Left lung (tissue), 14 donors: ENCODE measurements at regions of chr1 and their contacts with region 1.

Region 1: DNA sequence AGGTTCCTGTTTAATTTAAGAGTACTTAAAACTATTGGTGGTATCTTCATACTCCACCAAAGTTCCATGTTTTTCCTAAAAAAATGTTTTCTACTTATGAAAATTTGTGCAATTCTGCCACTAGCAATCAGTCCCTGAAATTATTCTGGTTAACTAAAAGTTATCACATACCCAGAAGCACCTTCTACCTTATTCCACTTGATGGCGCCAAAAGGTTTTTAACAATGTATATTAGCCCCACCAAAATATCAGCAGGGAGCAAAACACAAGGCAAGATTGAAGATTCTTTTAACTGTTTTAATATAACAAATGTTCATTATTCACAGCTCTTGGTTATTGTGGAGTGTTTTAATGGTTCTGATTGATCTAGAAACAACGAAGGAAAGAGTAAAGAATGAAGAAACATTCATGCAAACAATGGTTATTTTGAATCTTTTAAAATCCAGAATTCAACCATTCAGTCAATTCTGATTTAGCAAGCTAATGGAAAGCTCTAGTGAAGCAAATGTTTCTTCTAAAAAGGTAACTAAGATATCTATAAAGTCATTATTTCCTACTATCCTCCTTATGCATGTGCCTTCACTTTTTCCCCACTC is 67.2 kb downstream of the TTLL7 start:
- DNase-seq: peak in 2 of 4 donors; percentile 33 to 59
- ATAC-seq: peak; percentile 77
- H3K4me3 ChIP-seq: no peak overlapping the region
- H3K27ac ChIP-seq: no peak overlapping the region
- H3K4me1 ChIP-seq: no peaks in the 10 kb centered on the region
- H3K27me3 ChIP-seq: no peaks in the 10 kb centered on the region
- CTCF ChIP-seq: peak; percentile 51 to 57

Region 2: GRCh38 chr1:83791821-83792437 is 139.8 kb before region 1 on chr1:
- intact Hi-C with region 1: no loop called
- DNase-seq: no peak
- ATAC-seq: peak; percentile 33
- H3K4me3 ChIP-seq: no peak overlapping the region
- H3K27ac ChIP-seq: no peak overlapping the region
- H3K4me1 ChIP-seq: no peaks in the 10 kb centered on the region
- H3K27me3 ChIP-seq: no peaks in the 10 kb centered on the region
- CTCF ChIP-seq: no peak

Region 3: DNA sequence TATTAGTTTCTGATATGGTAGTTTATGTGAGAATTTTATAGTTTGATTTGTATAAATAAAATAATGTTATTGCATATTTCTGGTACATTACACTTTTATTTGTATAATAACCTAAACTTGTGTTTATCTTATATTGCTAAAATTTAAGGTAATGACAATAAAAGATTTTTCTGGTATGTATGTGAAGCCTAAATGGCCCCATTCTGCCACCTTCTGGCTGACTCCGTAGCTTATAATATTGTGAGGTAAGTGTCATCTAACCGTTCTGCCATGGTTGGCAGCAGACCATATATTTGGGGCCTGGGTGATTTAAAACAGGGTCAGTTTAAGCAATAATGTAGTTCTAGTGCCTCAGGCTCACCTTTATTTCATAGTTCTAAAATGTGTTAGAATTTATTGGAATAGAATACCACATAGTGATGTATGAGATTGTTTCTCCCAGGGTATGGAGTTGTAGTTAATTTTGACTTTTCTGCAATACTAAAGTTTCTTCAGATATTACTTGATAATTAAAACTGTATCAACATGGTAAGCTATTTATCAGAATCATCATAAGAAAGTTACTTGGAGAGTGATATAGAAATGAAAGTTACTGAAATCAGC is 191.1 kb after region 1 on chr1:
- intact Hi-C with region 1: loop called in 1 of 2 experiments (anchors 10 kb)
- DNase-seq: peak in 1 of 4 donors; percentile 40
- ATAC-seq: peak; percentile 77
- H3K4me3 ChIP-seq: no peak overlapping the region
- H3K27ac ChIP-seq: no peak overlapping the region
- H3K4me1 ChIP-seq: no peaks in the 10 kb centered on the region
- H3K27me3 ChIP-seq: no peaks in the 10 kb centered on the region
- CTCF ChIP-seq: peak; percentile 26 to 65

Region 4: DNA sequence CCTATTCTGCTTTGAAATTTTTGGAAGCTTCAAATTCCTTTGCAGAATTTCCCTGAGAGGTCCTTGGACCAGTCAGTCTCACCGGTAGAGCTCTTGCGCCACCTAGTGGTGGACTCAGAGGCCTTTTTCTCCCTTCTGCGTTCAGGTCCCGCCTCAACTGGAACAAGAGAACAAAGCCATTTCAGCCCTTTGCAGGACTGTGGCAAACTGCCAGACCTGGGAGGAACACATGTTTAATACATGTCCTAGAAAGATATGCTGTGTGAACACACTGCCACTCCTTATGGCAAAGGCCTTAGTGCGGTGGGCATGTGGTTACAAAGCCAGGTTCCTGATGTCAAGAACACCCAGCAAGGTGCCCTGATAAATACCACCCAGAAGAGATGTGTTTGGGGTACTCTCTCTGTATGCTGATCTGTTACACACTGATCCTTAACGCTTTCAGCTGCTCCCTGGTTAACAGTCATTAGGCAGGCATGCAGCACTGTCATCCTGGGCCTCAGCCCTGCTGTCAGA is 840.7 kb after region 1 on chr1:
- intact Hi-C with region 1: loop called in 1 of 2 experiments (anchors 10 kb)
- DNase-seq: peak in 3 of 4 donors; percentile 71 to 89 (median 75)
- ATAC-seq: peak; percentile 97
- H3K4me3 ChIP-seq: no peak overlapping the region
- H3K27ac ChIP-seq: no peak overlapping the region
- H3K4me1 ChIP-seq: no peaks in the 10 kb centered on the region
- H3K27me3 ChIP-seq: no peaks in the 10 kb centered on the region
- CTCF ChIP-seq: peak; percentile 88 to 95